MCF 10A (cell line): ENCODE measurements at regions of chr12 and their contacts with region 1.

Region 1: DNA sequence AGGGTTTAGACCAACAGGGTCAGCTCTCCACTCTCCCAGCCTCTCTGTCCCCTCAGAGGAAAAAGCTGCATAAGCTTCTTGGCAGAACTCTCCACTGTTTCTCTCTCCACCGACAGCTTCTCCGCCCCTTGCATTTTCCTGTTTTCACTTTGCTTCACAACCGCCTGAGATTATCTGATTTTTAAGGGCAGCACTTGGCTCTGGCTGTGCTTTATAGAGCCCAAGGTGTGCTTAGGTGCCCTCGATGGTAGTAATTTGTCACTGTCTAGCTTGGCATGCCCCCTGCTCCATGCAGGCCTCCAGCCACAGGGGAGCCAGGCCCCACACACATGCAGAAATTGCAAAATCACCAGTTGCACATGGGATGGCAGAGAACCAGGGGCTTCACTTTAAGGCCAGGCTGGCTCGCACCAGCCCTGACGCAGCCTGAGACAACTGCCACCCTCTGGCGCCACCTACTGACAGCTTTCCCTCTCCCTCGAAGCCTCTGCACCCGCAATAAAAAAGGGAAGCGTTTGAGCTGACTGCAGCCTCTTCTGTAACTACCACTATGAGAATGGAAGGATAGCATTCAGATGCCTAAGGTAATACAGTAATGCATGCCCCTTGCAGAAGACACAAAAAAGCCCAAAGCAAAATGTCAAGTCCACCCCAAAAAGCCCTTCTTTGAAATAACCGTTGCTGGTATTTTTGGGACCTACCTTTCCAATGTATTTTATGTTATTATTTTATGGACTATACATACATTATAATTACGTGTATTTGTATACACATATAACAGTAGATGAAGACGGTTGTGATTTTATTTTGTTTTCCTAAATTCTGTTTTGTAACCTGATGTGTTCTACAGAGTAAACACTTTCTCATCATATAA is 32.0 kb upstream of the RIMBP2 start:
- DNase-seq: peak; percentile 73
- H3K4me3 Mint-ChIP-seq: no peak overlapping the region
- H3K27ac Mint-ChIP-seq: no peak overlapping the region
- H3K4me1 Mint-ChIP-seq: no peaks in the 10 kb centered on the region
- H3K27me3 Mint-ChIP-seq: peaks cover 22% of the 10 kb centered on the region
- CTCF ChIP-seq: peak; percentile 86

Region 2: DNA sequence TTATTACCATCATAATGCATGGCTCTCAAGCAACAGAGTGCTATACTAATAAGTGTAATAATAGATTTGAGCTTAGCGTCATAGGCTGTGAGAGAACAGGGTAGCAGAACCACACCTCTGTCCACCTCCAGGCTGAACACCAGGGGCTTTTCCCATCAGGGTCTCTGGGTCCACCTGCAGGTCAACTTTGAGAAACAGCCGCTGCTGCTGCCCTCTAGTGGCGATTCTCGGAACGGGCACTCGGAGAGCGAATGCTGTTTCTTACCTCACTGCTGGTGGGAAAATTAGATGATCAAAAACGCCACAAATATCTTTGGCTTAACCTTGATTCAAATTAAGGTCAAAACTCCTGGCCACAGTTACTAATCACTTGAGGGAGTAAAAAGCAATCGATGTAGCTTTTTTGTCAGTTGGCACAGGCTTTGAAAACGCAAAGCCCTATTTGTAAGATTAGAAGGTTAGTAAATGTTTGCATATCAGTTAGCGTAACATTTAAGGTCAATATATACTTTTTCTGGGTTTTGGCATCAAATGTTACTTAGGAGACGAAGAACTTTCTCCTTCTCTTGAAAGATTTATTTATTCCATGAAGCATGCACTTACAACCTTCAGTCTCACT is 716.4 kb before region 1 on chr12:
- CTCF ChIA-PET with region 1: interaction called, 17 read pairs
- POLR2A ChIA-PET with region 1: no interaction called
- intact Hi-C with region 1: no loop called
- DNase-seq: peak; percentile 58
- H3K4me3 Mint-ChIP-seq: no peak overlapping the region
- H3K27ac Mint-ChIP-seq: no peak overlapping the region
- H3K4me1 Mint-ChIP-seq: no peaks in the 10 kb centered on the region
- H3K27me3 Mint-ChIP-seq: peaks cover 40% of the 10 kb centered on the region
- CTCF ChIP-seq: peak; percentile 90

Region 3: GRCh38 chr12:130049666-130050065 is 698.4 kb before region 1 on chr12:
- CTCF ChIA-PET with region 1: interaction called, 34 read pairs
- POLR2A ChIA-PET with region 1: no interaction called
- intact Hi-C with region 1: loop called (anchors 2 kb)
- DNase-seq: no peak
- H3K4me3 Mint-ChIP-seq: no peak overlapping the region
- H3K27ac Mint-ChIP-seq: no peak overlapping the region
- H3K4me1 Mint-ChIP-seq: no peaks in the 10 kb centered on the region
- H3K27me3 Mint-ChIP-seq: no peaks in the 10 kb centered on the region
- CTCF ChIP-seq: no peak

Region 4: DNA sequence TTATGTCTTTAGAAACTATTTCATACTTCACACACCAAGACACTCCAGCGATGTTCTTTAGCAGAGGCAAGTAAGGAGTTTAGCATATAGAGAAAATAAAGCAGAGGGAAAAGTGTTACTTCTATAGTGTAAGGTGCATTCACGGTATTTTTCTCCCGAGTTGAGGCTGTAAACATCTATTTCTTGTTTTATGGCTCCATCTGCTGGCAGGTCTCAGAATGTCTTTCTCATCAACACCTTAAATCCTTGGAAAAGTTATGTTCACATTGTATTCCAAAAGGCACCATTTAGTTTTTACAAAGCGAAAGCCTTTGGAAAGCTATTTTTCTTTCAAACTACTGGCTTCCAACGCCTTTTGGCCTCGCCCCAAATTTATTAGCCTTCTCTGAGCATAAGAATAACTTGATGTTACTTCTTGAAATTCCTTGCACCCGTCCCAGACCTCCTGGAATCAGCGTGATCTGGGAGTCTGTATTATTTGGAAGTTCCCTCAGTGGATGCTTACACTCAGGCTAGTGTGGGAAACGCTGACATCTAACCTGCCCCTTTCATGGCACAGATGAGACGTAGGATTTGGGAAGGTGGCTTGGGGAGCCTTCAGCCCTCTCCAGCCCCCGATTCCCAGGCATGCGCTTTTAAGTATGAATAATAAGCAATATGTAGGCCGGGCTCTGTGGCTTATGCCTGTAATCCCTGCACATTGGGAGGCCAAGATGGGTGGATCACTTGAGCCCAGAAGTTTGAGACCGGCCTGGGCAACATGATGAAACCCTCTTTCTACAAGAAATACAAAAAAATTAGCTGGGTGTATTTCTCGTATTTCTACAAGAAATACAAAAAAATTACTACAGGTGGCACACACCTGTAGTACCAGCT is 412.3 kb before region 1 on chr12:
- CTCF ChIA-PET with region 1: interaction called, 12 read pairs
- POLR2A ChIA-PET with region 1: no interaction called
- intact Hi-C with region 1: loop called (anchors 1 kb)
- DNase-seq: peak; percentile 60
- H3K4me3 Mint-ChIP-seq: no peak overlapping the region
- H3K27ac Mint-ChIP-seq: no peak overlapping the region
- H3K4me1 Mint-ChIP-seq: peaks cover 18% of the 10 kb centered on the region
- H3K27me3 Mint-ChIP-seq: peaks cover 12% of the 10 kb centered on the region
- CTCF ChIP-seq: peak; percentile 71

Region 5: GRCh38 chr12:130401703-130402102 is 346.4 kb before region 1 on chr12:
- CTCF ChIA-PET with region 1: interaction called, 21 read pairs
- POLR2A ChIA-PET with region 1: interaction called, 3 read pairs
- intact Hi-C with region 1: loop called (anchors 1 kb)
- DNase-seq: no peak
- H3K4me3 Mint-ChIP-seq: no peak overlapping the region
- H3K27ac Mint-ChIP-seq: no peak overlapping the region
- H3K4me1 Mint-ChIP-seq: peaks cover 6% of the 10 kb centered on the region
- H3K27me3 Mint-ChIP-seq: peaks cover 22% of the 10 kb centered on the region
- CTCF ChIP-seq: peak; percentile 27